Activated B cell treated with CpG ODN at 0.5 μM for 24 hours (primary cell): ENCODE measurements at regions of chr22 and their contacts with region 1.

Region 1: DNA sequence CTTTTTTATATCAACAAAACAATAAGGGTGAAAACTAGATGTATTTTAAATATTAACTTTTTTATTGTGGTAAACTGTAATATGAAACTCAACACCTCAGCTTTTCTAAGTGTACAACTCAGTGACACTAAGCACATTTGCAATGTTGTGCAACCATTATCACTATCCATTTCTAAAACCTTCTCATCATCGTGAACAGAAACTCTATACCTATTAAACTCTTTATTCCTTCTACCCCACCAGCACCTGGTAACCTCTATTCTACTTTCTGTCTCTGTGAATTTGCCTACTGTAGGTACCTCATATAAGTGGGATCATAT is 9.4 kb downstream of the HORMAD2 start:
- DNase-seq: no peak
- ATAC-seq: no peak
- H3K4me3 Mint-ChIP-seq: no peak overlapping the region
- H3K27ac Mint-ChIP-seq: no peak overlapping the region
- H3K4me1 Mint-ChIP-seq: no peaks in the 10 kb centered on the region
- H3K27me3 Mint-ChIP-seq: peaks cover 10% of the 10 kb centered on the region
- CTCF ChIP-seq: no peak

Region 2: DNA sequence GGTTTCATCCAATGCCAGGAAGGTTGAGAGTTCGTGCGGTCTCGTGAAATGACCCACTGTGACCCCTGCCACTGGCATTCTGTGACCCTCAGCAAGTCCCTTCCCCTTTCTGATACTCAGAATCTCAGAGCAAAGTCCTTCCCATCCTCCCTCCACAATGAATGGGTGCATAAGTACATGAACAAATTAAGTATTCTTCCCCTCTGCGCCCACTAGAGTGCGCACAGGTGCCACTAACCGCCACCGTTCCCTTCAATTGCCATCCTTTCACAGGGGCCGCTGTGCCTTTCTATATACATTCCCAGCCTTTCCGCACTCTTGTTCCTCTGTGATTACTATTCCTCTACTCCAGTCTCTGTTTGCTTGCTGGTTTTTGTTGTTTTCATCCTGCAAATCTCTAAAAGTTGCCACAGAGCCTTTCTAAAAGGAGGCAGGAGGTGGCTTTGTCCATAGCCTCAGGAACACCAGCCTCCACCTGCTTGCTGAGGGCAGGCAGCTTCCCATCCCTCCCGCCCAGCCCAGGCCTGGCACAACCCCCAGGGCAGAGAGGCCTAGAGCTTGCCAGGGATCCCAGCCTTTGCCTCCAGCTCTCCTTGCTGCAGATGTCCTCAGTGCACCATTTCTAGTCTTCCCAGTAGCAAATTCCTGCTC is 694.6 kb before region 1 on chr22:
- CTCF ChIA-PET with region 1: no interaction called
- POLR2A ChIA-PET with region 1: no interaction called
- intact Hi-C with region 1: loop called (anchors 5 kb)
- DNase-seq: peak; percentile 54
- ATAC-seq: peak; percentile 87
- H3K4me3 Mint-ChIP-seq: no peak overlapping the region
- H3K27ac Mint-ChIP-seq: no peak overlapping the region
- H3K4me1 Mint-ChIP-seq: peaks cover 17% of the 10 kb centered on the region
- H3K27me3 Mint-ChIP-seq: peaks cover 2% of the 10 kb centered on the region
- CTCF ChIP-seq: peak; percentile 78

Region 3: DNA sequence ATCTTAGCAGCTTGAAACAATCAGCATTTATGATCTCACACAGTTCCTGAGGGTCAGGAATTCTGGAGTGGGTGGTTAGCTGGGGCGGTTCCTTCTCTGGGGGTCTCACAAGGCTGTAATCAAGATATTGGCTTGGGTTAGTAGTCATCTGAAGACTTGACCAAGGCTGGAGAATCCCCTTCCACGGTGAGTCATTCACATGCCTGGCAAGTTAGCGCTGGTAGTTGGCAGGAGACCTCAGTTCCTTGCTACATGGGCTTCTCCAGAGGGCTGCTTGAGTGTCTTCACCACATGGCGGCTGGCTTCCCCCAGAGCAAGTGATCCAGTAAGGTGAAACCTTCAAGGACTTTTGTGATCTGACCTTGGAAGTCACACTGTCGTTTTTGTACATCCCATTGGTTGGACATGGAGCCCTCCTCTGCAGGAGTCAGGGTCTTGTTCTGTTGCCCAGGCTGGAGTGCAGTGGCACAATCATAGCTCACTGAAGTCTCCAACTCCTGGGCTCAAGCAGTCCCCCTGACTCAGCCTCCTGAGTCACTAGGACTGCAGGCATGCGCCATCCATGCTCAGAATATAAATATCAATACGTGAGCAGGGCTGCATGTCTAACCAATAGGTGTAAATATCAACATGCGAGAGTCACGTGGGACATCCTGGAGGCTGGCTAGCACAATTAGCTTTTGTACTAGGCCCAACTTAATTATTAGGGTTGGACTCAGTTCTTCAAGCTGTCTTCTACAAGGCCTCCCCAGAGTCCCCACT is 501.5 kb before region 1 on chr22:
- CTCF ChIA-PET with region 1: interaction called, 3 read pairs
- POLR2A ChIA-PET with region 1: no interaction called
- intact Hi-C with region 1: loop called (anchors 1 kb)
- DNase-seq: no peak
- ATAC-seq: no peak
- H3K4me3 Mint-ChIP-seq: no peak overlapping the region
- H3K27ac Mint-ChIP-seq: no peak overlapping the region
- H3K4me1 Mint-ChIP-seq: peaks cover 6% of the 10 kb centered on the region
- H3K27me3 Mint-ChIP-seq: no peaks in the 10 kb centered on the region
- CTCF ChIP-seq: no peak

Region 4: GRCh38 chr22:29635734-29636357 is 453.8 kb before region 1 on chr22:
- CTCF ChIA-PET with region 1: interaction called, 15 read pairs
- POLR2A ChIA-PET with region 1: no interaction called
- intact Hi-C with region 1: loop called (anchors 1 kb)
- DNase-seq: no peak
- ATAC-seq: no peak
- H3K4me3 Mint-ChIP-seq: no peak overlapping the region
- H3K27ac Mint-ChIP-seq: no peak overlapping the region
- H3K4me1 Mint-ChIP-seq: peaks cover 8% of the 10 kb centered on the region
- H3K27me3 Mint-ChIP-seq: no peaks in the 10 kb centered on the region
- CTCF ChIP-seq: no peak

Region 5: DNA sequence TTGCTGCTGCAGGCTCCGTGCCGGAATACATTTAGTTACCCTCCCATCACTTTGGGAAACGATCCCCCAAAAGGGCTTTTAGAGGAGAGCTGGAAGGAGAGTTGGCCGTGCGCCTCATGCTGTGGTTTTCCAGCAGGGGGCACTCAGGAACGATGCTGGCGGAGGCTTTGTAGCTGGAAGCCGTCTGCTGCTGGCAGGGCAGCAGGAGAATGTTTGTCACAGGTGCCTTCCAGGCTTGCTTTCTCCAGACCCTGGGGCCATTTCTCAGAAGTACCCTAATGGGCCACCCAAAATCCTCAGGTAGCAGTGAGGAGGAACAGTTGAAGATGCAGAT is 399.8 kb before region 1 on chr22:
- CTCF ChIA-PET with region 1: interaction called, 9 read pairs
- POLR2A ChIA-PET with region 1: no interaction called
- intact Hi-C with region 1: loop called (anchors 2 kb)
- DNase-seq: no peak
- ATAC-seq: no peak
- H3K4me3 Mint-ChIP-seq: no peak overlapping the region
- H3K27ac Mint-ChIP-seq: no peak overlapping the region
- H3K4me1 Mint-ChIP-seq: no peaks in the 10 kb centered on the region
- H3K27me3 Mint-ChIP-seq: no peaks in the 10 kb centered on the region
- CTCF ChIP-seq: no peak

Region 6: DNA sequence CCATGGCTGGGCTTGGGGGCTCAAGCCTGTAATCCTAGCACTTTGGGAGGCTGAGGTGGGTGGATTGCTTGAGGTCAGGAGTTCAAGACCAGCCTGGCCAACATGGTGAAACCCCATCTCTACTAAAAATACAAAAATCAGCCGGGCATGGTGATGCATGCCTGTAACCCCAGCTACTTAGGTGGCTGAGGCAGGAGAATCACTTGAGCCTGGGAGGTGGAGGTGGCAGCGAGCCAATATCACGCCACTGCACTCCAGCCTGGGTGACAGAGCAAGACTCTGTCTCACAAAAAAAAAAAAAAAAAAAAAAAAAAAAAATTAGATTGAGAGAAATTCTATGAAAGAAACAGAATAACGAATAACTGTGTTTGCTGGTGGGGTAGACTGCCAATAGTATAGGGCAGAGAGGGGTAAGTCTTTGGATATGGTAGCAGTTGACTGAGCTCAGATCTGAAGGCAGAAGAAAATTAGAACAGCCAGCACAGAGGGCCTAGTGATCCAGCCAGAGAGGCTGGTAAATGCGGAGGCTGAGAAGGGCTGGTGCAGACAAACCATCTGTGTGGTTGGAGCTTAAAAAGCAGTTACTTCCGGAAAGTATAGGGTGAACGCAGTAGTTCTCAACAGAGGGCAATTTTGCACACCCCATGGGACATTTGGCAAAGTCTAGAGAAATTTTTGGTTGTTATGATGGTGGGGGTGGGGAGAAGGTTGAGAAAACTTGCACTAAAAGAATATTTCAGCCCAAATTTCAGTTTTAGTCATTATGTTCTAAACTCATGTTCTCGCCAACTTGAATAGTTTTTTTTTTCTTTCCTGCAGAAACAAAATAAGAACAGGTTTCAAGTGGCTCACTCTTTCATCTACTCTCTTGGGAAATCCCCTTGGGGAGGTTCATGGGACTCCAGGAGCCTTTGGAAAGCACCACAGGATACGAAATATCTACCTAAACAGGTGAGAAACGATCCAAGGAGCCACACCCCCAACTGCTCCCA is 11.0 kb before region 1 on chr22:
- CTCF ChIA-PET with region 1: no interaction called
- POLR2A ChIA-PET with region 1: no interaction called
- intact Hi-C with region 1: no loop called
- DNase-seq: no peak
- ATAC-seq: peak; percentile 49
- H3K4me3 Mint-ChIP-seq: peak overlapping the region; percentile 38
- H3K27ac Mint-ChIP-seq: no peak overlapping the region
- H3K4me1 Mint-ChIP-seq: peaks cover 15% of the 10 kb centered on the region
- H3K27me3 Mint-ChIP-seq: peaks cover 32% of the 10 kb centered on the region
- CTCF ChIP-seq: no peak